H1 (cell line): ENCODE measurements at regions of chr2 and their contacts with region 1.

Region 1: DNA sequence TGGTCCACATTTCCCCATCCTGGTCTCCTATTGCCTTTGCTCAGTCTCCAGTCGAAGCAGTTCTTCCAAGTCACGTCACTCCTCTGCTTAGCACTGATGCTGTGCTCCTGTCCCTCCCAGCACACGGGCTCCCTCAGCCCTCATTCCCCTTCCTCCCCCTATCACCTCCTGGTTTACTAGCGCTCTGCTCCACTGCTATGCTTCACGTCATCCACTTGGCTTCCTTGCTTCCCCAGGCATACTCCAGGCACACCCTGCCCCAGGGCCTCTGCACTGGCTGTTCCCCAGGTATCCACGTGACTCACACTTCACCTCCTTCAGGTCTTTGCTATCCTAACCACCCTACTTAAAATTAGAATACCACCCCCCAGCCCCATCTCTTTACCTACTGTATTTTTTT is 269.3 kb downstream of the GLI2 start:
- DNase-seq: no peak
- H3K4me3 ChIP-seq: no peak overlapping the region
- H3K27ac ChIP-seq: no peak overlapping the region
- H3K4me1 ChIP-seq: peaks cover 3 to 9% (median 7%) of the 10 kb centered on the region in 4 experiments
- H3K27me3 ChIP-seq: peaks cover 0 to 13% (median 3%) of the 10 kb centered on the region in 4 experiments; a peak in 4 of 7 replicates
- CTCF ChIP-seq: no peak
- EP300 ChIP-seq: no peak
- POLR2A ChIP-seq: no peak
- RAD21 ChIP-seq: no peak

Region 2: DNA sequence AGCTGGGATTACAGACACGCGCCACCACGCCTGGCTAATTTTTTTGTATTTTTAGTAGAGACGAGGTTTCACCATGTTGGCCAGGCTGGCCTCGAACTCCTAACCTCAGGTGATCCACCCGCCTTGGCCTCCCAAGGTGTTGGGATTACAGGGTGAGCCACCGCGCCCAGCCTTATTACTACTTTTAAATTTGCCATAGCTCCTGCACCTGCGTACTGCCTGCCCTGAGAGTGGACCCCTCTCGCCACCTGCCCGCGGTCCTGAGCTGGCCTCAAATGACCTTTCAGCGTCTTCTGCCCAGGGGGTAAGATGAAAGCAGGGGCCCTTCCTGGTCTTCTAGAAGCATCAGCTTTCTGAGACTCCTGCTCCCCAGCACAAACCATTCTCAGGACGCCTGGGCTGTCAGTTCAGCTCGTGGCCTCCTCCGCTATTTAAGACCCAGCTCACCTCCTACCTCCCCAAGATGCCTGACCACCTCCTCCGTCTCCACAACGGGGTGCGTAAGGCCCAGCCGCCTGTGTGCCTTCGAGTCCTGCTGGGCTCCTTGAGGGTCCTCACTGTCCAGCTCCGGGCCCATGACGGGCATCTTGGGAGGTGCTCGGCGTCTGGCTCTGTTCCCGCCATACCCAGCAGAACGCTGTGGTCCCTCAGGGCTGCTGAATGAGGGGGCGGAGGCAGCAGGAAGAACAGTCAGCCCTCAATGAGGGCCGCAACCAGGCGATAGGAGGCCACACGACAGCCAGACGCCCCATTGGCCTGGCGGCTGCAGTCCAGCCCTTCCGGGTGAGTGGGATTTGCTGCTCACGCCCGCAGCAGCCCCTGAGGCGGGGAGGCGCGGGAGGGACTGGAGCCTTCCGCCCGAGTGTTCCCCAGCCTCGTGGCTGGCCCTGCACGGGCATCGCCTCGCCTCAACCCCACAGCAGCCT is 13.4 kb after region 1 on chr2:
- CTCF ChIA-PET with region 1: interaction called, 16 read pairs
- POLR2A ChIA-PET with region 1: interaction called, 4 read pairs
- DNase-seq: peak; percentile 53 to 77
- H3K4me3 ChIP-seq: peak overlapping the region in 1 of 4 experiments; percentile 33; a peak in 1 of 8 replicates
- H3K27ac ChIP-seq: no peak overlapping the region
- H3K4me1 ChIP-seq: peaks cover 0 to 11% (median 10%) of the 10 kb centered on the region in 4 experiments; a peak in 6 of 7 replicates
- H3K27me3 ChIP-seq: peaks cover 0 to 9% (median 5%) of the 10 kb centered on the region in 4 experiments; a peak in 4 of 7 replicates
- CTCF ChIP-seq: no peak
- EP300 ChIP-seq: no peak
- POLR2A ChIP-seq: peak in 1 of 2 experiments; percentile 38; a peak in 1 of 3 replicates
- RAD21 ChIP-seq: no peak

Region 3: DNA sequence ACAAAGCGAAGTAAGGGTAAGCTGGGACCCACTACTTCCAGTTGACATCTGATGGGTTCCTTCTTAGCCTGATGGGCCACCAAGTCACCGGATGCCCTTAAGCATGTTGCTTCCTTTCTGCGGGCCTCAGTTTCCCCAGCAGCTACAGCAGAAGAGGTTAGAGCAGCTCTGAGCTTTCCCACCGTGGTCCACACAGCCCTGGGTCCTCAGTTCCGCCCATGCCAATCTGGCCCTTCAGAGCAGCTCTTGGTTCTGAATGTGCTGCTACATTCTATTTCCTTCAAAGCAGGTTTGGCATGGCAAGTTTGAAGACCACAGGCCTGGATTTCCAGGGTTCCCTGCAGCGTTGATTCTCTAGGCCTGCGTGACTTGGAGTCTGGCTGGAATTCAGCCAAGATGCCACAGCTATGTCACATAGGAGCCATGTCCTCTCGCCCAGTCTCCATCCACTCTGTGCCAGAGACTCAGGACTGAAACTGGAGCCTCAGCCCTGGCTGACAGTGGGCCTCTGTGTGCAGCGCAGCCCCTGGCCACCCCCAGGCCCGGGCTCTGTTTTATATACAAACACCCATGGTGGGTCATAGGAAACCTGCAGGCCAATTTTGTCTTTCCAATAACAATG is 200.5 kb after region 1 on chr2:
- CTCF ChIA-PET with region 1: no interaction called
- POLR2A ChIA-PET with region 1: no interaction called
- DNase-seq: no peak
- H3K4me3 ChIP-seq: no peak overlapping the region
- H3K27ac ChIP-seq: no peak overlapping the region
- H3K4me1 ChIP-seq: no peaks in the 10 kb centered on the region
- H3K27me3 ChIP-seq: no peaks in the 10 kb centered on the region; a peak in 1 of 7 replicates
- CTCF ChIP-seq: no peak
- EP300 ChIP-seq: no peak
- POLR2A ChIP-seq: no peak
- RAD21 ChIP-seq: no peak